Dorsolateral prefrontal cortex (tissue), 120 donors: ENCODE measurements at regions of chr9 and their contacts with region 1.

Region 1: GRCh38 chr9:37592108-37592951 is at the start of gene TOMM5:
- DNase-seq: peak; percentile 89 to 96 (median 93)
- H3K4me3 ChIP-seq: peak within 1 kb of the TSS; percentile 63 to 100 (median 94)
- H3K27ac ChIP-seq: peak within 1 kb of the TSS in 58 of 59 donors; percentile 43 to 97 (median 87)
- H3K27me3 ChIP-seq: no peaks in the 10 kb centered on the region
- CTCF ChIP-seq: peak in 41 of 56 donors; percentile 3 to 59 (median 35)
- total RNA-seq, gene TOMM5: 30.0 to 71.9 (median 50.0) TPM

Region 2: DNA sequence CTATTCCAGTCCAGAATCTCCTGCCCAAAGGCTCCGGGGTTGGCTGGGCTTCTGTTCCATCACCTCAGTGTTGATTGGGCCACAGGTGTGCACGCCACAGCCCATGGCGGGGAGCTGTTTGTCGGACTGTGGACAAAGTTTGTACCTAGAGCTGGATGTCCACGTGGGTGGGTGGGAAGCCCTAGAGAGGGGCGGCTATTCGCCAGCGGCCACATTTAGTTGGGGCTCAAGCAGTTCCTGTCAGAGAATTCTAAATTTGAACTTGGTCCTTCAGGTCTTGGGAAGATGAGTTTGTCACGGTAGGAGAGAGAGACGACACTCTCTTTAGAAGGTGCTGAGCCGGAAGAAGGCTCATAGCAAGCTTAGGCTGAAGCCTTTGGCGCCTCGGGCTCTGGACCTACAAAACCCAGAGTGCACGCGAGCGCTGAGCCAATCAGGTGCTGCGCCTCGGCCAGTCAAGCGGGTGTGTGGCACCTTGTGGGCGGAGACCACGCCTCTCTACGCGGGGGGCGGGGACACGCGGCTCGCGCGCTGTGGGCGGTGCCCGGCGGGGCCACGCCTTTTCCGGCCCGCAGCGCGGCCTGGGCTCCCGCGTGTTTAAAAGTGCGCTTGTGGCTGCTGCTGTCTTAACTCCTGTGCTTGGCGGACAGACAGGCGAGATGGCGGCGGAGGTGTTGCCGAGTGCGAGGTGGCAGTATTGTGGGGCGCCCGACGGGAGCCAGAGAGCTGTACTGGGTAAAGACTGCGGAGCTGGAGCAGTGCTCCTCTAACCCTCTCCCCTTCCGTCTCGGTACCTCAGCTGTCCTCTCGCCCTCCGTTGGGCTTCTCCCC is 106.7 kb before region 1 on chr9 and contains the start of gene POLR1E:
- intact Hi-C with region 1: loop called in 1 of 2 experiments (anchors 5 kb)
- DNase-seq: peak; percentile 82 to 97 (median 95)
- H3K4me3 ChIP-seq: peak within 1 kb of the TSS; percentile 57 to 97 (median 83)
- H3K27ac ChIP-seq: peak within 1 kb of the TSS in 37 of 59 donors; percentile 1 to 80 (median 46)
- H3K27me3 ChIP-seq: no peaks in the 10 kb centered on the region
- CTCF ChIP-seq: peak in 16 of 56 donors; percentile 7 to 46 (median 22)
- total RNA-seq, gene POLR1E: 10.9 to 24.1 (median 16.7) TPM

Region 3: GRCh38 chr9:37540634-37541033 is 51.7 kb before region 1 on chr9:
- intact Hi-C with region 1: no loop called
- DNase-seq: peak in 4 of 10 donors; percentile 16 to 67 (median 44)
- H3K4me3 ChIP-seq: no peak overlapping the region
- H3K27ac ChIP-seq: no peak overlapping the region
- H3K27me3 ChIP-seq: no peaks in the 10 kb centered on the region
- CTCF ChIP-seq: no peak

Region 4: GRCh38 chr9:37740636-37741328 is 148.5 kb after region 1 on chr9:
- intact Hi-C with region 1: loop called (anchors 5 to 10 kb)
- DNase-seq: no peak
- H3K4me3 ChIP-seq: no peak overlapping the region
- H3K27ac ChIP-seq: no peak overlapping the region
- H3K27me3 ChIP-seq: no peaks in the 10 kb centered on the region
- CTCF ChIP-seq: no peak

Region 5: GRCh38 chr9:37753489-37754190 is 161.3 kb after region 1 on chr9 and contains the start of gene TRMT10B:
- intact Hi-C with region 1: loop called (anchors 5 to 10 kb)
- DNase-seq: peak; percentile 50 to 81 (median 63)
- H3K4me3 ChIP-seq: peak within 1 kb of the TSS; percentile 53 to 97 (median 86)
- H3K27ac ChIP-seq: peak within 1 kb of the TSS in 52 of 59 donors; percentile 7 to 89 (median 65)
- H3K27me3 ChIP-seq: no peaks in the 10 kb centered on the region
- CTCF ChIP-seq: peak in 30 of 56 donors; percentile 6 to 35 (median 19)
- total RNA-seq, gene TRMT10B: 7.8 to 20.2 (median 13.0) TPM

Region 6: GRCh38 chr9:37800631-37801286 is 208.4 kb after region 1 on chr9 and contains the start of gene DCAF10:
- intact Hi-C with region 1: loop called in 1 of 2 experiments (anchors 5 kb)
- DNase-seq: peak; percentile 70 to 93 (median 84)
- H3K4me3 ChIP-seq: peak within 1 kb of the TSS; percentile 58 to 99 (median 93)
- H3K27ac ChIP-seq: peak within 1 kb of the TSS in 55 of 59 donors; percentile 43 to 91 (median 80)
- H3K27me3 ChIP-seq: no peaks in the 10 kb centered on the region
- CTCF ChIP-seq: peak in 41 of 56 donors; percentile 12 to 55 (median 33)
- total RNA-seq, gene DCAF10: 17.1 to 40.1 (median 27.8) TPM